ENCODE measurements at regions of chr22 and their contacts with region 1.

Region 1: GRCh38 chr22:46035742-46036557 is 59.0 kb upstream of the WNT7B start:
- DNase-seq: peak; percentile 100
- H3K4me3 Mint-ChIP-seq: peak overlapping the region; percentile 84
- H3K27ac Mint-ChIP-seq: peak overlapping the region; percentile 90
- H3K4me1 Mint-ChIP-seq: peaks cover 17% of the 10 kb centered on the region
- H3K27me3 Mint-ChIP-seq: no peaks in the 10 kb centered on the region

Region 2: GRCh38 chr22:45903355-45904149 is 132.4 kb before region 1 on chr22:
- CTCF ChIA-PET with region 1: no interaction called
- POLR2A ChIA-PET with region 1: no interaction called
- DNase-seq: no peak
- H3K4me3 Mint-ChIP-seq: no peak overlapping the region
- H3K27ac Mint-ChIP-seq: no peak overlapping the region
- H3K4me1 Mint-ChIP-seq: no peaks in the 10 kb centered on the region
- H3K27me3 Mint-ChIP-seq: peaks cover 17% of the 10 kb centered on the region

Region 3: DNA sequence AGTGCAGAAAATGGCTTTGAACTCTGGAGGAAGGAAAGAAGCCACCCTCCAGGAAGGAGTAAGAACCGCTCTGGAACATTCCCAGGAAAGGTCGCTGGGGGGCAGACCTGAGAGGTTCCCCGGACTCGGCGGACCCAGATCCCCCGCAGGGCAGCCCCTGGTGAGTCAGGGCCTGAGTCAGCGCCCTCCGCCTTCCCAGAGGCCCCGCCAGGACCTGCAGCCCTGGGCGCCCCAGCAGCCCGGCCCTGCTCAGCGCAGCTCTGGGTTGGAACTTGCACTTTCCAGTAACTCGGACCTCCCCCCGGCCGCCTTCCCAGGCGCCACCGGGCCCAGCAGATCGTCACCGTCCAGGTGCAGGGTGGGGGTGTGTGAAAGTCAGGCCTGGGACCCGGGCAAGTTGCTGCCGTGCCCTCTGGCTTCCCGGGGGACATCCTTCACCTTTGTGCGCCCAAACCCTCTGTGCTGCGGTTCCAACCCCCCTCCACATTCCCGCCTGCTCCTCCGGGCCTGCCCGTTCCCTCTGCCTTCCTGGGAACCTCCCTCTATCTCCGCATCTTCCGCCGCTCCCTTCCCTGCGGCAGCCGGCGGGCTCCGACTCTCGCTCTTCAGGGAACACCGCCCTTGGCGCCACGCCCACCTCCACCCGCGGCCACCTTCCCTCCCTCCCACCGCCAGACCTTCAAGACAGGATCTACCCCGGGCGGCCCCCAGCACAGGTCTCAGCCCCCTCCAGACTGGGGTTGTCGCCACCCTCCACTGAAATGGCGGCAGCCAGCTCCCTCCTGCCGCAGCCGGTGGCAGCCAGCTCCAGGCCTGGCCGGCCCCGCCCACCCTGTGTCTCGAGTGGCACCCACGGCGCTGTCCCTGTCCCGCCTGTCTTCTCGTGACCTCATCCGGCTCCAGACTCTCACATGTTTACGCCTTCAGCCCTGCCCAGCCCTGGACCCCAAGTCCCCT is 22.2 kb before region 1 on chr22:
- CTCF ChIA-PET with region 1: interaction called, 72 read pairs
- POLR2A ChIA-PET with region 1: interaction called, 40 read pairs
- DNase-seq: peak; percentile 84
- H3K4me3 Mint-ChIP-seq: peak overlapping the region; percentile 82
- H3K27ac Mint-ChIP-seq: peak overlapping the region; percentile 72
- H3K4me1 Mint-ChIP-seq: peaks cover 13% of the 10 kb centered on the region
- H3K27me3 Mint-ChIP-seq: no peaks in the 10 kb centered on the region

Region 4: GRCh38 chr22:46057762-46058420 is 21.9 kb after region 1 on chr22:
- CTCF ChIA-PET with region 1: interaction called, 4 read pairs
- POLR2A ChIA-PET with region 1: interaction called, 70 read pairs
- DNase-seq: peak; percentile 60
- H3K4me3 Mint-ChIP-seq: peak overlapping the region; percentile 53
- H3K27ac Mint-ChIP-seq: peak overlapping the region; percentile 90
- H3K4me1 Mint-ChIP-seq: peaks cover 40% of the 10 kb centered on the region
- H3K27me3 Mint-ChIP-seq: peaks cover 2% of the 10 kb centered on the region

Measured in activated CD4-positive, alpha-beta memory T cell treated with anti-CD3 and anti-CD28 coated beads, Interleukin-2, amount 10 ng/mL, durations not matched to agents 7 days and 5 days (primary cell).